HEK293 (cell line): ENCODE measurements at regions of chr10 and their contacts with region 1.

Region 1: GRCh38 chr10:29392376-29393021 is 103.6 kb downstream of the LYZL1 start:
- H3K4me3 ChIP-seq: no peak overlapping the region
- H3K27ac ChIP-seq: no peak overlapping the region
- H3K4me1 ChIP-seq: no peaks in the 10 kb centered on the region
- CTCF ChIP-seq: no peak; the same call in 1 of the 2 replicates

Region 2: DNA sequence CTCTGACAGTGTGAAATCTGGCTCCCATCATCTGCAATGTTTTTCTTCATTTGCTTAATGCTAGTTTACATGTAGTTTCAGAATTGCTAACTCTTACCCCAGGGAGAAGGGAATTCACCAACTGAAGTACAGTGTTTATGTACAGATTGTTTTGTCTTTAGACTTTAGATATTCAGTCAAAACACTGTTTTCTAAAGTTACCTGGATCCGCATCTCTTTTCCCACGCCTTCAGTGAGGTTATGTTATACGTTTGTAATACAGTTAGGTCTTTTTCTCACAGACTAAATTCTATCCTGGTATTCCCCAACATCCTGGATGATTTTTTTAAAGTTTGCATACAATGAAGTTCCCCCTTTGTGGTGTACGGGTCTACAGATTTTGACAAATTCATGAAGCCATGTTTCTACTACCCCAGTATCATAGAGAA is 106.9 kb before region 1 on chr10:
- CTCF ChIA-PET with region 1: no interaction called
- POLR2A ChIA-PET with region 1: no interaction called
- H3K4me3 ChIP-seq: no peak overlapping the region
- H3K27ac ChIP-seq: no peak overlapping the region
- H3K4me1 ChIP-seq: no peaks in the 10 kb centered on the region
- CTCF ChIP-seq: no peak

Region 3: DNA sequence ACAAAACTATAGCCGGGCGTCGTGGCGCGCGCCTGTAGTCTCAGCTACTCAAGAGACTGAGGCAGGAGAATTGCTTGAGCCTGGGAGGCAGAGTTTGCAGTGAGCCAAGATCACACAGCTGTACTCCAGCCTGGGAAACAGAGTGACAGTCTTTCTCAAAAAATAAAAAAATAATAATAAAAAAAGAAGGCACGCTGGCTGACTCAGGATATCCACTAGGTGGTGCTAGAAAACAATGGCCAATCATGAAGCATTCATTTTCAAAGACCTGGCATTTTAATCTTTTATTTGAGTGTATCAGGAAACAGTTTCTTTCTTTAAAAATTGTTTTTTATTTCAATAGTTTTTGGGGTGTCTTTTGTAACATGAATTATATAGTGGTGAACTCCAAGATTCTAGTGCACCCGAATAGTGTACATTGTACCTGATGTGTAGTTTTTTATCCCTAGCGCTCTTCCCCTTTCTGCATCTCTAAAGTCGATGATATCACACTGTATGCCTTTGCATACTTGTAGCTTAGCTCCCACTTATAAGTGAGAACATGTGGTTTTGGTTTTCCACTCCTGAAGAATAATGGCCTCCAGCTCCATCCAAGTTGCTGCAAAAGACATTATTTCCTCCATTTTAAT is 15.1 kb before region 1 on chr10:
- CTCF ChIA-PET with region 1: interaction called, 25 read pairs
- POLR2A ChIA-PET with region 1: no interaction called
- H3K4me3 ChIP-seq: no peak overlapping the region
- H3K27ac ChIP-seq: no peak overlapping the region
- H3K4me1 ChIP-seq: no peaks in the 10 kb centered on the region
- CTCF ChIP-seq: no peak

Region 4: DNA sequence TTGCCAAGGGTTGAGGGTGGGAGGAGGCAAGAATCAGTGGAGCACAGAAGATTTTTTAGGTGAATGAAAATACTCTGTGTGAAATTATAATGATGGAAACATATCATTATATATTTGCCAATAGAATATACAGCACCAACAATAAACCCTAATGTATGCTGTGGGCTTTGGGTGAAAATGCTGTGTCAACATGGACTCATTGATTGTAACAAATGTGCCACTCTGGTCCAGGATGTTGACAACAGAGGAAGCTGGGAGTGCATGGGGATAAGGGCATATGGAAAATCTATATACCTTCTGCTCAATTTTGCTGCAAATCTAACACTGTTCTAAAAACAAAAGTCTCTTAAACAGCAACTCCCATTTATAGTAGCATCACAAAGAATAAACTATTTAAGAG is 10.7 kb after region 1 on chr10:
- CTCF ChIA-PET with region 1: interaction called, 10 read pairs
- POLR2A ChIA-PET with region 1: no interaction called
- H3K4me3 ChIP-seq: no peak overlapping the region
- H3K27ac ChIP-seq: no peak overlapping the region
- H3K4me1 ChIP-seq: no peaks in the 10 kb centered on the region
- CTCF ChIP-seq: no peak

Region 5: GRCh38 chr10:29646238-29646902 is 253.9 kb after region 1 on chr10:
- CTCF ChIA-PET with region 1: no interaction called
- POLR2A ChIA-PET with region 1: no interaction called
- H3K4me3 ChIP-seq: no peak overlapping the region
- H3K27ac ChIP-seq: peak overlapping the region; percentile 61
- H3K4me1 ChIP-seq: peaks cover 37% of the 10 kb centered on the region
- CTCF ChIP-seq: no peak